ENCODE measurements at regions of chr5 and their contacts with region 1.

Region 1: GRCh38 chr5:34826347-34826746 is 12.6 kb upstream of the TTC23L start:
- DNase-seq: no peak
- H3K4me3 ChIP-seq: no peak overlapping the region
- H3K27ac ChIP-seq: no peak overlapping the region
- H3K4me1 ChIP-seq: no peaks in the 10 kb centered on the region
- H3K27me3 ChIP-seq: no peaks in the 10 kb centered on the region
- CTCF ChIP-seq: no peak
- EP300 ChIP-seq: no peak
- POLR2A ChIP-seq: no peak

Region 2: GRCh38 chr5:33470544-33470943 is 1355.8 kb before region 1 on chr5:
- intact Hi-C with region 1: loop called (anchors 10 kb)
- DNase-seq: peak in 1 of 2 donors; percentile 57
- H3K4me3 ChIP-seq: no peak overlapping the region
- H3K27ac ChIP-seq: no peak overlapping the region
- H3K4me1 ChIP-seq: no peaks in the 10 kb centered on the region
- H3K27me3 ChIP-seq: no peaks in the 10 kb centered on the region
- CTCF ChIP-seq: peak in 1 of 7 experiments; percentile 12
- EP300 ChIP-seq: no peak
- POLR2A ChIP-seq: no peak